Activated CD4-positive, alpha-beta T cell treated with anti-CD3 and anti-CD28 coated beads for 36 hours (primary cell): ENCODE measurements at regions of chr3 and their contacts with region 1.

Region 1: GRCh38 chr3:5426094-5426883 is 238.8 kb downstream of the EDEM1 start:
- DNase-seq: peak; percentile 88
- ATAC-seq: peak; percentile 88
- H3K4me3 Mint-ChIP-seq: no peak overlapping the region
- H3K27ac Mint-ChIP-seq: no peak overlapping the region
- H3K4me1 Mint-ChIP-seq: peaks cover 9% of the 10 kb centered on the region
- H3K27me3 Mint-ChIP-seq: no peaks in the 10 kb centered on the region

Region 2: DNA sequence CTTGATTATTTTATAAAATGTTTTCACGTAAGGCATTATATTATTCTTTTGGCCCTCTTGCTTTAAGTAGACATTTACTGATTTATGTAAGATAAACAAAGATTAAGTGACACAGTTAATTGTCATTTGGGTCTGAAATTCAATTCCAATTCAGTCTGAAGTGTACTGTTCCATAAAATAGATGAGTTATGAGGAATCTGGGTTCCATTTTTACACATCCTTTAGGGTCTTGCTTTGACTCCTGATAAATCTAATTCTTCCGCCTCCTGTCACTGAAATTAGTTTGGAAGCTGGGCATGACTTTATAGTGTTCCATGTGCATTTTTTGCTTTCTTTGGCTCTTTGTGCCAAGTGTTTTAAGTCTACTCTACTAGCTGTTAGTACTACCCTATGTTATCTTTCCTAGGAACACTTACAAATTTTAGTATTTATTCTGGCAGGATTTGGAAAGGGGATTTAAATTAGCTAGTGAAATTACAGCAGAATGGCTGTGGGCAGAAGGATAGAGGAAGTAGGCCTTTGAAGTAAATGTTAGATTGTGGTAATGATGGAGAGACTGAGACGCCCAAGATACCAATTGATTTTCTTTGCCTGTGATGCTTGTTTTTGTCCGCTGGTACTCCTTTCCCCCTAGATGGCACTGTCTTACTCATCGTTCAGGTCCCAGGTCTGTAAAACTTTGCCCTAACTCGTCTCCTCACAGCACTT is 289.9 kb before region 1 on chr3:
- CTCF ChIA-PET with region 1: no interaction called
- POLR2A ChIA-PET with region 1: no interaction called
- intact Hi-C with region 1: loop called in 1 of 2 experiments (anchors 10 kb)
- DNase-seq: peak; percentile 42
- ATAC-seq: peak; percentile 94
- H3K4me3 Mint-ChIP-seq: no peak overlapping the region
- H3K27ac Mint-ChIP-seq: peak overlapping the region; percentile 76
- H3K4me1 Mint-ChIP-seq: peaks cover 63% of the 10 kb centered on the region
- H3K27me3 Mint-ChIP-seq: no peaks in the 10 kb centered on the region

Region 3: DNA sequence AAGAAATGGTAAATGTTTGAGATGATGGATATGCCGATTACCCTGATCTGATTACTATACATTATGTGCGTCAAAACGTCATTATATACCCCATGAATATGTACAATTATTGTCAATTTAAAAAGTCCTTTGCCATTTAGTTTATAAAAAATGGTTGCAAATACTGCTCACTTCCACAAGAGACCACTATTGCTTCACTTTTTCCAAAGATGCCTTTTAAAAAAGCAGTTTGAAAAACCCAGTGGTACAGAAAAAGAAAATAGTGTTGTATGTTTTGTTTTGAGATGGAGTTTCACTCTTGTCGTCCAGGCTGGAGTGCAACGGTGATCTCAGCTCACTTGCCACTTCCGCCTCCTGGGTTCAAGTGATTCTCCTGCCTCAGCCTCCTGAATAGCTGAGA is 199.5 kb before region 1 on chr3:
- CTCF ChIA-PET with region 1: interaction called, 7 read pairs
- POLR2A ChIA-PET with region 1: no interaction called
- intact Hi-C with region 1: loop called in 1 of 2 experiments (anchors 5 kb)
- DNase-seq: no peak
- ATAC-seq: peak; percentile 40
- H3K4me3 Mint-ChIP-seq: no peak overlapping the region
- H3K27ac Mint-ChIP-seq: no peak overlapping the region
- H3K4me1 Mint-ChIP-seq: no peaks in the 10 kb centered on the region
- H3K27me3 Mint-ChIP-seq: no peaks in the 10 kb centered on the region

Region 4: GRCh38 chr3:5304789-5305683 is 121.3 kb before region 1 on chr3:
- CTCF ChIA-PET with region 1: interaction called, 3 read pairs
- POLR2A ChIA-PET with region 1: no interaction called
- intact Hi-C with region 1: loop called (anchors 1 to 5 kb)
- DNase-seq: peak; percentile 70
- ATAC-seq: peak; percentile 81
- H3K4me3 Mint-ChIP-seq: no peak overlapping the region
- H3K27ac Mint-ChIP-seq: no peak overlapping the region
- H3K4me1 Mint-ChIP-seq: no peaks in the 10 kb centered on the region
- H3K27me3 Mint-ChIP-seq: peaks cover 3% of the 10 kb centered on the region

Region 5: DNA sequence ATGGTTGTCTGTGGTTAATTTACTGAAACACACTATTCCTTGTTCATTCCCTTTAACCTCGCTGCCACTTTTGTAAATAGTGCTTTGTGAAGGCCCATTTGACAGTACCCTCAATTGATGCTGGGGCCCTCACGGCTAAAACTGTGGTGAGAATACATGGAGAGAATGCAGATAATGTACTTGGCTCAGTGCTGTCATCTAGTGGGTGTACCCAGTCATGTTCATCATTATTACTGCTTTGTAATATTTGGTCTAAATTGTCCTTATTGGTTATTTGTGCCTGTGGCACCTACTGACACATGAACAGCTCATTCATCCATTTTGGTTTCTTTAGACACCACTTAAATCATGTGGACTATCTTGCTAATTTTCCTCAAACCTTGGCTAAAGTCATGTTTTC is 304.8 kb after region 1 on chr3:
- CTCF ChIA-PET with region 1: no interaction called
- POLR2A ChIA-PET with region 1: no interaction called
- intact Hi-C with region 1: loop called (anchors 2 to 10 kb)
- DNase-seq: no peak
- ATAC-seq: no peak
- H3K4me3 Mint-ChIP-seq: no peak overlapping the region
- H3K27ac Mint-ChIP-seq: no peak overlapping the region
- H3K4me1 Mint-ChIP-seq: no peaks in the 10 kb centered on the region
- H3K27me3 Mint-ChIP-seq: no peaks in the 10 kb centered on the region

Region 6: DNA sequence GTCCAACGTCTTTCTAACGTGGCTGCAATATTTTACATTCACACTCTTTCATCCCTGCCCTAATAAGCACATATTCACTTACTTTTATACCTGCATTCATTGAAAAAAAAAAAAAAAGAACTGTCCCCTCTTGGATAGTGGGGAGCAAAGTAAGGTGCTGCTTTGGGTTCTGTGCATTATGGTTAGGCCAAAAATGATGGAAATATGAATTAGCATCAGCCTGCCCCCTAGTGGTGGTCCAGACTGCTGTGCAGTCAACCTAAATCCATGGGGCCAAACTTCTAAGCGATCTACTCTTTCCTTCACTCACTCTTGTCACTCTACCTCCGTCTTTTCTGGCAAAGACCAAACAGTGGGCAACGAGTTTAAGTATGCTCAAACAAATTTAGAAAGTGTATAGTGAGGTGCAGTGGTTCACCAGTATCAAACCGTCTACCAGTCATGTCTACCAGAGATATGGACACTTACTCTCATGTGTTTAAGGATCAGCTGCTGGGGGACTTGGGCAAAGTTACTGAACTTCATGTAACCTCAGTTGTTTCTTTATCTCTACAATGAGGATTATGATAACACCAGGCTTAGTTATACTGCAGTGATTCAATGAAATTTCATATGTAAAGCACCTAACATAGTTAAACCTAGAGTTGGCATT is 1373.1 kb after region 1 on chr3:
- CTCF ChIA-PET with region 1: no interaction called
- POLR2A ChIA-PET with region 1: no interaction called
- intact Hi-C with region 1: loop called in 1 of 2 experiments (anchors 1 kb)
- DNase-seq: peak; percentile 66
- ATAC-seq: no peak
- H3K4me3 Mint-ChIP-seq: no peak overlapping the region
- H3K27ac Mint-ChIP-seq: no peak overlapping the region
- H3K4me1 Mint-ChIP-seq: no peaks in the 10 kb centered on the region
- H3K27me3 Mint-ChIP-seq: no peaks in the 10 kb centered on the region